ENCODE measurements at regions of chr3 and their contacts with region 1.

Region 1: GRCh38 chr3:120417272-120417911 is 33.4 kb downstream of the FSTL1 start:
- DNase-seq: peak; percentile 100
- H3K4me3 ChIP-seq: peak overlapping the region in 2 of 3 experiments; percentile 12 to 24
- H3K27ac ChIP-seq: peak overlapping the region; percentile 75
- H3K4me1 ChIP-seq: peaks cover 29% of the 10 kb centered on the region
- H3K27me3 ChIP-seq: no peaks in the 10 kb centered on the region
- CTCF ChIP-seq: peak; percentile 79 to 96
- POLR2A ChIP-seq: no peak

Region 2: DNA sequence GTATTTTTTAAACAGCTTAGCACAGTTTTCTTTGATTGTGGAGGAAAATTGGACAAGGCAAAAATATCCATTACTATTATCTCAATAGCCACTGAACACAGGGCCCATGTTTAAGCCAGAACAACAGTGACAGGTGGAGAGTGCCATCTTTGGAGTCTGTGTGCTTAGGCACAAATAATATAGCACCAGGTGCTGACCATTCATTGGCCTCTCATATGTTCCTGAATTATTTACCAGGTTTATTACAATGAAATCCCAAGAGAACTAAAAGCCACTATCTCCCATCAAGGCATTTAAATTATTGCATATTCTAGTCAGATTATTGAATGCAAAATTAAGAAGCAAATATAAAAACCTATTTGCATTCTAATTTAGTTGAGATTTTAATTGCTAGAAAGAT is 172.0 kb before region 1 on chr3:
- CTCF ChIA-PET with region 1: interaction called, 83 read pairs
- POLR2A ChIA-PET with region 1: no interaction called
- dilution Hi-C with region 1: no loop called
- intact Hi-C with region 1: loop called (anchors 1 kb)
- DNase-seq: no peak
- H3K4me3 ChIP-seq: no peak overlapping the region
- H3K27ac ChIP-seq: no peak overlapping the region
- H3K4me1 ChIP-seq: no peaks in the 10 kb centered on the region
- H3K27me3 ChIP-seq: peaks cover 10 to 21% of the 10 kb centered on the region in 2 experiments
- CTCF ChIP-seq: no peak
- POLR2A ChIP-seq: no peak

Region 3: GRCh38 chr3:120404876-120405275 is 12.5 kb before region 1 on chr3:
- CTCF ChIA-PET with region 1: interaction called, 11 read pairs
- POLR2A ChIA-PET with region 1: no interaction called
- dilution Hi-C with region 1: no loop called
- intact Hi-C with region 1: no loop called
- DNase-seq: no peak
- H3K4me3 ChIP-seq: no peak overlapping the region
- H3K27ac ChIP-seq: no peak overlapping the region
- H3K4me1 ChIP-seq: no peaks in the 10 kb centered on the region
- H3K27me3 ChIP-seq: no peaks in the 10 kb centered on the region
- CTCF ChIP-seq: no peak
- POLR2A ChIP-seq: no peak

Region 4: GRCh38 chr3:120450600-120451271 is 33.3 kb after region 1 on chr3 and contains the start of gene FSTL1:
- CTCF ChIA-PET with region 1: interaction called, 367 read pairs
- POLR2A ChIA-PET with region 1: interaction called, 4 read pairs
- dilution Hi-C with region 1: no loop called
- intact Hi-C with region 1: loop called (anchors 1 kb)
- DNase-seq: peak; percentile 67
- H3K4me3 ChIP-seq: peak within 1 kb of the TSS; percentile 70 to 95 (median 92)
- H3K27ac ChIP-seq: peak within 1 kb of the TSS; percentile 89
- H3K4me1 ChIP-seq: peaks cover 22% of the 10 kb centered on the region
- H3K27me3 ChIP-seq: no peaks in the 10 kb centered on the region
- CTCF ChIP-seq: no peak
- POLR2A ChIP-seq: peak; percentile 95
- total RNA-seq, gene FSTL1: 522 and 562 TPM in 2 replicates

Region 5: DNA sequence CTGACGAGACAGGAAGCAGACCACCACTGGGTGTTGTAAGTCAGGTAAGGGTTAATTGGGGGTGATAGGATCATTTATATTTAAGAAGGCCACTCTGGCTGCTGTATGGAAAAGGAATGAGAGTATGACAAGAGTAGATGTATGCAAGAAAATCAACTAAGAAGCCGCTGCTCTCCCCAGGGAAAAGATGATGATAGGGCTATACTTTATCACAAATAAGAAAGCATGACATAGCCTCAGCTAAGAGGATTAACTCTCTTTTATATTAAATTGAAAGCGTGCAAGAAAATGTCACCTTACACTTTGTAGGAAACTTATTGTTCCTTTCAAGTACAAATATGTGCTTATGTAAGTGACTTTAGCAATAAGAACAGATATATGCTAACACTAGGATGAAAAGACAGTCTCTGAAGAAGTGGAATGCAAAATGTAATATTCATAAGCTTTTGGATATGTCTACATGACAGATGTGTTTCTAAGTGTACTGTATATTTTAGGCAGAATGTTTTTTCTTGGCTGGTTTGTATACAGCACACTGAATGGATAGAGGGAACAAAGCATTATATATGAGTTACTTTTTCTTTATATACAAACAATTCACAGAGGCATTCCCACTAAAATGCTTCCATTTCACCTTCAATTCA is 170.1 kb after region 1 on chr3:
- CTCF ChIA-PET with region 1: no interaction called
- POLR2A ChIA-PET with region 1: no interaction called
- dilution Hi-C with region 1: no loop called
- intact Hi-C with region 1: no loop called
- DNase-seq: no peak
- H3K4me3 ChIP-seq: no peak overlapping the region
- H3K27ac ChIP-seq: no peak overlapping the region
- H3K4me1 ChIP-seq: no peaks in the 10 kb centered on the region
- H3K27me3 ChIP-seq: no peaks in the 10 kb centered on the region
- CTCF ChIP-seq: no peak
- POLR2A ChIP-seq: no peak

Region 6: GRCh38 chr3:120678331-120678947 is 261.0 kb after region 1 on chr3:
- CTCF ChIA-PET with region 1: interaction called, 3 read pairs
- POLR2A ChIA-PET with region 1: no interaction called
- dilution Hi-C with region 1: no loop called
- intact Hi-C with region 1: loop called (anchors 5 kb)
- DNase-seq: peak; percentile 95
- H3K4me3 ChIP-seq: peak overlapping the region in 1 of 3 experiments; percentile 36
- H3K27ac ChIP-seq: peak overlapping the region; percentile 63
- H3K4me1 ChIP-seq: peaks cover 21% of the 10 kb centered on the region
- H3K27me3 ChIP-seq: no peaks in the 10 kb centered on the region
- CTCF ChIP-seq: no peak
- POLR2A ChIP-seq: peak; percentile 60

Measured in endothelial cell of umbilical vein (primary cell).